ENCODE measurements at regions of chr1 and their contacts with region 1.

Region 1: GRCh38 chr1:115112496-115113375 is 23.4 kb upstream of the TSPAN2 start:
- DNase-seq: peak; percentile 58
- H3K4me3 ChIP-seq: no peak overlapping the region
- H3K27ac ChIP-seq: no peak overlapping the region
- H3K4me1 ChIP-seq: no peaks in the 10 kb centered on the region
- H3K27me3 ChIP-seq: no peaks in the 10 kb centered on the region
- CTCF ChIP-seq: peak; percentile 75 to 94 (median 86)
- POLR2A ChIP-seq: no peak

Region 2: GRCh38 chr1:114979278-114979891 is 133.4 kb before region 1 on chr1:
- intact Hi-C with region 1: loop called (anchors 5 kb)
- DNase-seq: peak; percentile 85
- H3K4me3 ChIP-seq: no peak overlapping the region
- H3K27ac ChIP-seq: no peak overlapping the region
- H3K4me1 ChIP-seq: no peaks in the 10 kb centered on the region
- H3K27me3 ChIP-seq: no peaks in the 10 kb centered on the region
- CTCF ChIP-seq: peak; percentile 78 to 89 (median 79)
- POLR2A ChIP-seq: no peak

Region 3: GRCh38 chr1:115012006-115012405 is 100.7 kb before region 1 on chr1:
- intact Hi-C with region 1: no loop called
- DNase-seq: no peak
- H3K4me3 ChIP-seq: no peak overlapping the region
- H3K27ac ChIP-seq: no peak overlapping the region
- H3K4me1 ChIP-seq: no peaks in the 10 kb centered on the region
- H3K27me3 ChIP-seq: no peaks in the 10 kb centered on the region
- CTCF ChIP-seq: no peak
- POLR2A ChIP-seq: no peak